Mammary epithelial cell (primary cell): ENCODE measurements at regions of chr21 and their contacts with region 1.

Region 1: GRCh38 chr21:45386721-45387371 is 18.1 kb upstream of the COL18A1 start:
- DNase-seq: peak; percentile 56
- H3K4me3 ChIP-seq: no peak overlapping the region
- H3K27ac ChIP-seq: no peak overlapping the region
- H3K4me1 ChIP-seq: peaks cover 6% of the 10 kb centered on the region
- H3K27me3 ChIP-seq: no peaks in the 10 kb centered on the region
- CTCF ChIP-seq: peak in 1 of 2 donors; percentile 30

Region 2: GRCh38 chr21:45102391-45102932 is 284.4 kb before region 1 on chr21:
- CTCF ChIA-PET with region 1: interaction called, 13 read pairs
- dilution Hi-C with region 1: no loop called
- in situ Hi-C with region 1: no loop called
- intact Hi-C with region 1: no loop called
- DNase-seq: peak; percentile 67
- H3K4me3 ChIP-seq: no peak overlapping the region
- H3K27ac ChIP-seq: no peak overlapping the region
- H3K4me1 ChIP-seq: peaks cover 29% of the 10 kb centered on the region
- H3K27me3 ChIP-seq: no peaks in the 10 kb centered on the region
- CTCF ChIP-seq: peak; percentile 28 to 41

Region 3: DNA sequence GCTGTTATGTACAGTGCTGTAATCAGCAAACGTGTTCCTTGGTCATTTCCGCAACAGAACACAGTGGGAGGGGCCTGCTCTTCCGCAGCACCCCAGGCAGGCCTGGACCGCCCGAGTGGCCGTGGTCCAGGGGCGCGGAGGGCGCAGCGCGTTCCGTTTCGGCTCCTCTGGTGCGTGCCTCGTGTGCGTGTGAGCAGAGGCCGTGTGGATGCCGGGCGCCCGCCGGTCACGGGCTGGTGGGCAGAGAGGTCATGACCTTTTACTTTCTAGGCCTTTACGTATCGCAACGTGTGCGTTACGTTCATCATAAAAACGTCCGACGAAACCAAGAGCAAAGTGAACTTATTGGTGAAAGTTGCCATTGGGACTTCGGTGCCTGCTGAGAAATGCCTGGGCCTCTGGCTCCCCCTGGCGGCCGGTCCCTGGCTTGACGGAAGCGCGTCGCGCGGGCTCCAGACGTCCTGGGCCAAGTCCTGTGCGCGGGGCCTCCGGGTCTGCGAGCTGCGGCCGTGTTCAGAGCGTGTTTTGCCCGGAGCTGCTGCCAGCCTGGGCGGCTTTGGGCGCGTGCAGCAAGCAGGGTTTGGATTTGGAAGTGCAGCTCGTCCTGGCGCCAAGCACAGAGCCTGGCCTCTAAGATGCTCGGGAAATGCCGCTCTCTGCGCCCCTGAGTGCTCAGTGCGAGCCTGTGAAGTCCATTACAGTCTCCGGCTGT is 52.5 kb after region 1 on chr21:
- CTCF ChIA-PET with region 1: no interaction called
- dilution Hi-C with region 1: no loop called
- in situ Hi-C with region 1: no loop called
- intact Hi-C with region 1: loop called (anchors 1 kb)
- DNase-seq: peak; percentile 59
- H3K4me3 ChIP-seq: peak overlapping the region in 2 of 3 experiments; percentile 20 to 30
- H3K27ac ChIP-seq: no peak overlapping the region
- H3K4me1 ChIP-seq: peaks cover 7% of the 10 kb centered on the region
- H3K27me3 ChIP-seq: no peaks in the 10 kb centered on the region
- CTCF ChIP-seq: peak; percentile 79 to 96